ENCODE measurements at regions of chr7 and their contacts with region 1.

Region 1: GRCh38 chr7:116173051-116174028 is 37.0 kb upstream of the TES start:
- DNase-seq: no peak
- ATAC-seq: peak; percentile 39

Region 2: GRCh38 chr7:116030651-116031276 is 142.6 kb before region 1 on chr7 and contains the start of gene TFEC:
- intact Hi-C with region 1: no loop called
- DNase-seq: no peak
- ATAC-seq: peak; percentile 21
- total RNA-seq, gene TFEC: 2.0 TPM

Region 3: GRCh38 chr7:116290740-116291139 is 117.4 kb after region 1 on chr7:
- intact Hi-C with region 1: no loop called
- DNase-seq: no peak
- ATAC-seq: no peak

Region 4: DNA sequence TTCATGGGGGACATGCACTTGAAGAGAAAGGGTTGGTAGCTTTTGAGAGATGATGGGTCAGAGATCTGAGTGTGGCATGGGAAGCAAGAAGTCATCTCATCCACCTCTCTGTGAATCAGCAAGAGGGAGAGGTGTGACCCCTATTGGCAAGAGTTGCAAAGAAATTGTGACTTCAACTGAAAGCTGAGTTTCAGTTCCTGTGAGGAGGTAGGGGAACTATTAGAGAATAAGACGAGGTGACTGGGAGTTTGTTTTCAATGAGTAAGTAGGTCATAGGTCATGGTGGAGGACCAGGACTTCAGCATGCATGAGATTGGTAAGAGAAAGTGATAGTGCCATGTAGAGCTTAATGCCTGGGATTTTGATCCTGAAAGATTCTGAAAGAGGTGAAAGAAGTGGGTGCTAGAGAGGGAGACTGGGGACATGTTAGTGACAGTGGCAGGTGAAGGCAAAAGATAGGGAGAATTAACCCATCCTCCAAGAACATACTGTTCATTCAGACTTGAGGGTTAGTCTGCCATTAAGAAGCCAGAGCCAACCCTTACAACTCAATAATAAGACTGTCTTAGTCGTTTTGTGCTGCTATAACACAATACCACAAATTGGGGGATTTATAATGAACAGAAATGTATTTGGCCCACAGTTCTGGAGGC is 613.6 kb after region 1 on chr7:
- intact Hi-C with region 1: no loop called
- DNase-seq: no peak
- ATAC-seq: peak; percentile 45

Region 5: GRCh38 chr7:116809636-116810266 is 636.4 kb after region 1 on chr7:
- intact Hi-C with region 1: loop called (anchors 10 kb)
- DNase-seq: no peak
- ATAC-seq: peak; percentile 71